GM23248 (cell line): ENCODE measurements at regions of chr7 and their contacts with region 1.

Region 1: DNA sequence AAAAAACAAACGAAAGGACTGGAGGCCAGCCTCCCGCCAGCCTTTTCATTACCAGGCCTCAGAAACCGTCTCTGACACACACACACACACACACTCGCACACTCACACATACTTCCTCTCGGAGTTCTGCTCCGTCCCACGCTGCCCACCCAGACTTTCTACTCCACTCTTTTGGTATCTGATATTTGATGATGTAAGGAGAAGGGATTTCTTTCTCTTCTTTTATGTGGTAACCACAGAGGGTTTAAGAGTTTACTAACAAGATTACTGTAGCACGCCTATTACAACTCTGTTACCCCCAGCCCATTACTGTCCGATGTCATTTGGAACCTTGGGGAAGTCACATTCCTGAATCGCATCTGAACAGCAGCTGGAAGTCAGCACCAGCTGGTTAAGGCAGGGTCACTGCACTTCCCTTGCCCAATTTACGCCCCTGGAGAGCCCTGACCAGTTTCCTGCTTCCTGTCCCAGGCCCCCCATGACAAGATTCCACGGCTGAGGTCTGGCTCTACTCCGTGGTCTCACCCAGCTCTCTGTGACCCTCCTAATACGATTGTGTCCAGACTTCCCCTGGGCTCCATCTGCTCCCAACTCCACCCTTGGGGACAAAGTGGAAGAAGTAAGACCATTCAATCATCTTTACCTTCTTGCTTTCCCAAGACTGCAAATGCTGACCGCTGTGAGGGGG is 1.1 kb downstream of the DENND2A start:
- DNase-seq: peak; percentile 78
- H3K4me3 ChIP-seq: peak overlapping the region; percentile 75
- H3K27ac ChIP-seq: no peak overlapping the region
- H3K4me1 ChIP-seq: peaks cover 22% of the 10 kb centered on the region
- H3K27me3 ChIP-seq: no peaks in the 10 kb centered on the region

Region 2: DNA sequence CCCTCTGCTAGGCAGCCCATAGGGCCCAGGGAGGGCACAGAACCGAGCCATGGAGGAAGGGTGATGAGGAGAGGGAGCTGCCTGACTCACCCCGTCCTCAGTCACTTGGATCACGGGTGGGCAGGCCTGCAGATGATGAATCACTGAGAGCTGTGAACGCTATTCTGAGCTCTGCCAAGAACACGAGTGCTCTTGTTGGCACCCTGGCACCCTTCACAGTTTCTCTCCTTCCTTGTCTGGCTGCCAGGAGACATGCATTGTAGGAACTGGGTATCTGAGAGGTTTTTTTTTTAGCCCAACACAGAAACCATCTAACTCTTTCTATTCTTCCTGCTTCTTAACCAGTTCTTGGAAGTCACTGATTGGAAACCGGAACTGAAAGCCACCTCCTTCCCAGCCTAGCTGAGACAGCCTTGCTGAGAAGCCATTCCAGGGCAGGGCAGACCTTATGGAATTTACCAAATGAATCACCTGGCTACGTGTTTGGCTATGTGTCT is 323.3 kb before region 1 on chr7:
- in situ Hi-C with region 1: no loop called
- DNase-seq: peak; percentile 97
- H3K4me3 ChIP-seq: peak overlapping the region; percentile 59
- H3K27ac ChIP-seq: peak overlapping the region; percentile 86
- H3K4me1 ChIP-seq: peaks cover 31% of the 10 kb centered on the region
- H3K27me3 ChIP-seq: no peaks in the 10 kb centered on the region

Region 3: GRCh38 chr7:140479062-140479738 is 160.3 kb before region 1 on chr7 and contains the start of gene MKRN1:
- in situ Hi-C with region 1: no loop called
- DNase-seq: peak; percentile 97
- H3K4me3 ChIP-seq: peak within 1 kb of the TSS; percentile 94
- H3K27ac ChIP-seq: peak within 1 kb of the TSS; percentile 75
- H3K4me1 ChIP-seq: peaks cover 9% of the 10 kb centered on the region; the same call in 1 of the 2 replicates
- H3K27me3 ChIP-seq: no peaks in the 10 kb centered on the region
- total RNA-seq, gene MKRN1: 68.8 and 72.7 TPM in 2 replicates

Region 4: DNA sequence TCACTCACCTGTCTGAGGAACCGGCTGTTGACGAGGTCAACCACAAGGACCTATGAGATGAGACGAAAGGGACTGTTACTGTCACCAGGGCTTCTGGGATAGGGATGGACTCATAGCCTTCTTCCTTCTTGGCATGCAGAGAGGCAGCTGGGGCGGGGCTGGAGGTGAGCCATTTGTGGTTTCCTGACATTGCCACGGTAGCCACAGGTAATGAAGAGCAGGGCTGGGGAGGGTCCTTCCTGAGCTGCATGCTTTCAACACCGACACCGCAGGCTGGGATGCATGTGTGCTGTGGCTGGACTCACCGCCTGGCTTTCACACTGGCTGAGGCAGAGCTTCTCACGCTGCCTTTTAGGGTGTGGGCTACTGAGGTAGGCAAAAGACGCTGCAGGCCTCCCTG is 113.8 kb before region 1 on chr7:
- in situ Hi-C with region 1: loop called (anchors 10 kb)
- DNase-seq: peak; percentile 60
- H3K4me3 ChIP-seq: no peak overlapping the region
- H3K27ac ChIP-seq: no peak overlapping the region
- H3K4me1 ChIP-seq: peaks cover 14% of the 10 kb centered on the region; the same call in 1 of the 2 replicates
- H3K27me3 ChIP-seq: no peaks in the 10 kb centered on the region